ENCODE measurements at regions of chr6 and their contacts with region 1.

Region 1: DNA sequence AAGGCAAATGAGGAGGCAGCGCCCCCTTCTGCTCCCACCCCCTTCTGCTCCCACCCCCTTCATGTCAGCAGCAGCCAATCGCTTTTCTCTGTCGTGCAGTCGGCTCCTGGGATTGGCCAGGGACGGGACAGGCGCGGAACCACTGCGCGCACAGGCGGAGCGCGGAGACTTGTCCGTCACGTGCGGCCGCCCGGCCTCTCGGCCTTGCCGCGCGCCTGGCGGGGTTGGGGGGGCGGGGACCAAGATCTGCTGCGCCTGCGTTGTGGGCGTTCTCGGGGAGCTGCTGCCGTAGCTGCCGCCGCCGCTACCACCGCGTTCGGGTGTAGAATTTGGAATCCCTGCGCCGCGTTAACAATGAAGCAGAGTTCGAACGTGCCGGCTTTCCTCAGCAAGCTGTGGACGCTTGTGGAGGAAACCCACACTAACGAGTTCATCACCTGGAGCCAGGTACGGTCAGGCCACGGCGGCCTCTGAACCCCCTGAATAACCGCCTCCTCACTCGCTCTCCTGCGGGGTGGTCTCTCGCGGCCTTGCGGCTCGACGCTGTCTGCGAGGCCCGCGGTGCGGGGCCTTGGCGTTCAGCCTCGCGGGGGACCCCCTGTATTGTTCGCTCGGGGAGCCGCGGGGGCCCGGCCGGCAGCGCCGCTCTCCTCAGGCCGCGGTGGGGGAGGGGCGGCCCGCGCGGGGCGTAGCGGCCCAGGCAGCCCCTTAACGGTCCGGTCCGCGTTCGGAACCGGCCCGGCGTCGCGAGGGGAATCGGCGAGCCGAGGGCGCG is at the start of gene HSF2:
- DNase-seq: peak; percentile 96 to 98
- ATAC-seq: peak; percentile 92 to 99 (median 96)
- H3K4me3 ChIP-seq: peak within 1 kb of the TSS; percentile 95
- H3K27ac ChIP-seq: peak within 1 kb of the TSS; percentile 96
- H3K4me1 ChIP-seq: peaks cover 26% of the 10 kb centered on the region
- H3K27me3 ChIP-seq: no peaks in the 10 kb centered on the region
- CTCF ChIP-seq: peak; percentile 22
- total RNA-seq, gene HSF2: 17.9 to 58.2 (median 21.7) TPM

Region 2: GRCh38 chr6:122072014-122072647 is 327.4 kb before region 1 on chr6:
- intact Hi-C with region 1: no loop called
- DNase-seq: no peak
- ATAC-seq: no peak
- H3K4me3 ChIP-seq: no peak overlapping the region
- H3K27ac ChIP-seq: no peak overlapping the region
- H3K4me1 ChIP-seq: peaks cover 3% of the 10 kb centered on the region
- H3K27me3 ChIP-seq: no peaks in the 10 kb centered on the region
- CTCF ChIP-seq: no peak

Region 3: GRCh38 chr6:122365775-122366403 is 33.7 kb before region 1 on chr6:
- intact Hi-C with region 1: no loop called
- DNase-seq: no peak
- ATAC-seq: no peak
- H3K4me3 ChIP-seq: no peak overlapping the region
- H3K27ac ChIP-seq: no peak overlapping the region
- H3K4me1 ChIP-seq: no peaks in the 10 kb centered on the region
- H3K27me3 ChIP-seq: no peaks in the 10 kb centered on the region
- CTCF ChIP-seq: no peak

Region 4: DNA sequence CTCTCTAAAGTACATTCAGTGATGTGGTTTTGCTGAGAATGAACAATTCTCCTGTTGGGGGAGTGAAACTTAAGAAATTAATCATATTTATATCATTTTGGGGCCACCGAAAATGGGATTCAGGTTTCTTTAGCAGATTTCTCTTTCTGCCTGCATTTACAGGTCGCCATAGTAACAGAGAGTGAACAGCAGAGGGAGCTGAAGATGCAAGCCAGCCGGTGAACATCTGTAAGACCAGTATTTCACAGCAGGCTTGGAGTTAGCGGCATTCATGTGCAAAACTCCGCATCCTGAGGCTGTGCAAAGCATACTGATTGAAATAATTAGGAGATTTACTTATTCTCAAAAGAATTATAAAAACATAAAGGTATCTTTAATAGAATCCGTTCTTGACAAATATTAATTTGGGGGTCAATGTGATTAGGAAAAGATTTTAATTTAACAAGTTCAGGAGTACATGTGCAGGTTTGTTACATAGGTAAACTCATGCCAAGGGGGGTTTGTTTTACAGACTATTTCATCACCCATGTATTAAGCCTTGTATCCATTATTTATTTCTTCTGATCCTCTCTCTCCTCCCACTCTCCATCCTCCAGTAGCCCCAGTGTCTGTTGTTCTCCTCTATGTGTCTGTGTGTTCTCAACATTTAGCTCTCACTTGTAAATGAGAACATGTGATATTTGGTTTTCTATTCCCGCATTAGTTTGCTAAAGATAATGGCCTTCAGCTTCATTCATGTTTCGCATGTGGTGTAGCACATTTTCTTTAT is 17.9 kb before region 1 on chr6:
- intact Hi-C with region 1: no loop called
- DNase-seq: peak; percentile 18 to 56
- ATAC-seq: peak; percentile 70 to 96 (median 84)
- H3K4me3 ChIP-seq: no peak overlapping the region
- H3K27ac ChIP-seq: no peak overlapping the region
- H3K4me1 ChIP-seq: no peaks in the 10 kb centered on the region
- H3K27me3 ChIP-seq: no peaks in the 10 kb centered on the region
- CTCF ChIP-seq: peak; percentile 77

Region 5: GRCh38 chr6:122484760-122485159 is 85.2 kb after region 1 on chr6:
- intact Hi-C with region 1: loop called in 1 of 2 experiments (anchors 5 kb)
- DNase-seq: no peak
- ATAC-seq: no peak
- H3K4me3 ChIP-seq: no peak overlapping the region
- H3K27ac ChIP-seq: no peak overlapping the region
- H3K4me1 ChIP-seq: no peaks in the 10 kb centered on the region
- H3K27me3 ChIP-seq: peaks cover 0 to 2% (median 0%) of the 10 kb centered on the region in 3 donors
- CTCF ChIP-seq: no peak

Measured in psoas muscle (tissue), 8 donors.